ENCODE measurements at regions of chr19 and their contacts with region 1.

Region 1: DNA sequence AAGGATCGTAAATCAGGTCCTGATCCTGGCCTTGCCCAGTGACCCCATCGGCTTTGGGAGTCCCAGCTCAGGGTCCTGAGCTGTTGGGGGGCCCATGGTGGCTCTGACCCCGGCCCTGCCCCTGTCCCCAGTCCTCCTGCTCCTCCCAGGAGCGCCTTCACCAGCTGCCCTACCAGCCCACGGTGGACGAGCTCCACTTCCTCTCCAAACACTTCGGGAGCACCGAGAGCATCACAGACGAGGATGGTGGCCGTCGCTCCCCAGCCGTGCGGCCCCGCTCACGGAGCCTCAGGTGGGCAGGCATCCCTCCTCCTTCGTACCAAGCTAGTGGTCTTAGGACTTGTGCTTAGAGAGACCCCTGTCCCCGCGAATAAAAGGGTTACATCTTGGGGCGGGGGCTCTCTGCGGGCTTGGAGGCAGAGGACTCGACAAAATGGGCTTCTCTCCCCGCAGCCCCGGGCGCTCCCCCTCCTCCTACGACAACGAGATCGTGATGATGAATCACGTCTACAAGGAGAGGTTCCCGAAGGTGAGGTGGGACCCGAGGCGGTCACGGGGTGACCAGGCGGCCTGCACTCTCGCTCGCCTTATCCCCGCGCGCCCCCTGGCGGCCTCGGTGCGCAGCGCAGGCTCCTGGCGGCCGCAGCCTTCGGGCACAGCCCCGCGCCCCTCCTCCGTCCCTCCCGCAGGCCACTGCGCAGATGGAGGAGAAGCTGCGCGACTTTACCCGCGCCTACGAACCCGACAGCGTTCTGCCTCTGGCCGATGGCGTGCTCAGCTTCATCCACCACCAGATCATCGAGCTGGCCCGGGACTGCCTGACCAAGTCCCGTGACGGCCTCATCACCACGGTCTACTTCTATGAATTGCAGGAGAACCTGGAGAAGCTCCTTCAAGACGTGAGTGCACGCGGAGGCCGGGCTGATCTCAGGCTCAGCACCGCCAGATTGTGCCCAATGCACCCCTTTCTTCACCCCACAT is 9.1 kb downstream of the MAST1 start:
- DNase-seq: peak; percentile 97
- H3K4me3 Mint-ChIP-seq: peak overlapping the region; percentile 77
- H3K27ac Mint-ChIP-seq: peak overlapping the region; percentile 41
- H3K4me1 Mint-ChIP-seq: peaks cover 6% of the 10 kb centered on the region
- H3K27me3 Mint-ChIP-seq: peaks cover 14% of the 10 kb centered on the region

Region 2: GRCh38 chr19:12766051-12766521 is 81.4 kb before region 1 on chr19:
- intact Hi-C with region 1: loop called (anchors 2 kb)
- DNase-seq: peak; percentile 96
- H3K4me3 Mint-ChIP-seq: peak overlapping the region; percentile 70
- H3K27ac Mint-ChIP-seq: no peak overlapping the region
- H3K4me1 Mint-ChIP-seq: peaks cover 3% of the 10 kb centered on the region
- H3K27me3 Mint-ChIP-seq: no peaks in the 10 kb centered on the region

Region 3: DNA sequence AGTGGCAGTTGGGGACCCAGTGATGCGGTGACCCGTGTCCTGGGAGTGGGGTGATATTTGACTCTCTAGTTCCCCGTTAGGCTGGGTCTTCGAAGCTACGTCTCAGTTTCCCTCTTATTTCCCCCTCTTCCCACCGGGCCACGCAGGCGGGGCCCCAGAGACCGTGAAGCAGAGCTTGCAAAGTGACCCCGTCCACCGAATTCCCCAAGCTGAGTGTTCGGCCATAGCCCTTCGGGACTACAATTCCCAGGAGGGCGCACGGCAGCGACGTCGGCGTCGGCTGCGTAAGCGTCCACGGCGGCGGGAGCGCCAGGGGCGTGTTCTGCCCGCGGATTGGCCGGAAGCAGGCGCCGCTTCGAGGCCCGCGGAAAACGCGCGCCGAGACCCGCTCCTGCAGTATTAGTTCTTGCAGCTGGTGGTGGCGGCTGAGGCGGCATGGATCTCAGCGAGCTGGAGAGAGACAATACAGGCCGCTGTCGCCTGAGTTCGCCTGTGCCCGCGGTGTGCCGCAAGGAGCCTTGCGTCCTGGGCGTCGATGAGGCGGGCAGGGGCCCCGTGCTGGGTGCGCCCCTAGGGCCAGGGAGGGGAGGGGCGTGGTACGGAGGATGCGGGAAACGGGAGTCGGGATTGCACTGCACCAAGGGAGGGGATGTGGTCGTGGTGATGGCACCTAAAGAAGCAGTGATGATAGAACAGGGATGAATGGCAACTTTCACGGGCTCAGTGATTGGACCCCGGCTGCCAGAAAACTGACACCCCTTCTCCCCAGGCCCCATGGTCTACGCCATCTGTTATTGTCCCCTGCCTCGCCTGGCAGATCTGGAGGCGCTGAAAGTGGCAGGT is 41.0 kb before region 1 on chr19 and contains the start of gene RNASEH2A:
- intact Hi-C with region 1: loop called (anchors 2 kb)
- DNase-seq: peak; percentile 97
- H3K4me3 Mint-ChIP-seq: peak within 1 kb of the TSS; percentile 96
- H3K27ac Mint-ChIP-seq: peak within 1 kb of the TSS; percentile 89
- H3K4me1 Mint-ChIP-seq: peaks cover 20% of the 10 kb centered on the region
- H3K27me3 Mint-ChIP-seq: no peaks in the 10 kb centered on the region
- total RNA-seq, gene RNASEH2A: 35.8 and 51.5 TPM in 2 replicates